GM12878 (cell line): ENCODE measurements at regions of chr1 and their contacts with region 1.

Region 1: GRCh38 chr1:199243423-199244061 is 604.7 kb downstream of the PTPRC start:
- DNase-seq: peak; percentile 67
- ATAC-seq: peak; percentile 100
- H3K4me3 ChIP-seq: no peak overlapping the region
- H3K27ac ChIP-seq: no peak overlapping the region
- H3K4me1 ChIP-seq: peaks cover 11% of the 10 kb centered on the region
- H3K27me3 ChIP-seq: no peaks in the 10 kb centered on the region
- CTCF ChIP-seq: peak; percentile 91 to 94 (median 93)
- EP300 ChIP-seq: no peak
- POLR2A ChIP-seq: no peak
- RAD21 ChIP-seq: peak; percentile 96

Region 2: GRCh38 chr1:198575798-198576641 is 667.5 kb before region 1 on chr1:
- CTCF ChIA-PET with region 1: no interaction called
- POLR2A ChIA-PET with region 1: no interaction called
- RAD21 ChIA-PET with region 1: no interaction called
- SMC1A ChIA-PET with region 1: no interaction called
- in situ Hi-C with region 1: no loop called
- intact Hi-C with region 1: no loop called
- DNase-seq: no peak
- ATAC-seq: peak; percentile 65
- H3K4me3 ChIP-seq: no peak overlapping the region
- H3K27ac ChIP-seq: no peak overlapping the region
- H3K4me1 ChIP-seq: peaks cover 12% of the 10 kb centered on the region
- H3K27me3 ChIP-seq: no peaks in the 10 kb centered on the region
- CTCF ChIP-seq: no peak
- EP300 ChIP-seq: 0 out of 4 replicates have a peak, but pooled peaks of 1 of the 2 experiments have one; percentile 14
- POLR2A ChIP-seq: no peak
- RAD21 ChIP-seq: no peak

Region 3: DNA sequence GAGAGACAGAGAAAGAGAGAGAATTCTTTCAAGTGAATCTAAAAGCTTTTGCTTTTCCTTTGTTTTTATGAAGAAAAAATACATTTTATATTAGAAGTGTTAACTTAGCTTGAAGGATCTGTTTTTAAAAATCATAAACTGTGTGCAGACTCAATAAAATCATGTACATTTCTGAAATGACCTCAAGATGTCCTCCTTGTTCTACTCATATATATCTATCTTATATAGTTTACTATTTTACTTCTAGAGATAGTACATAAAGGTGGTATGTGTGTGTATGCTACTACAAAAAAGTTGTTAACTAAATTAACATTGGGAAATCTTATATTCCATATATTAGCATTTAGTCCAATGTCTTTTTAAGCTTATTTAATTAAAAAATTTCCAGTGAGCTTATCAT is 487.1 kb before region 1 on chr1:
- CTCF ChIA-PET with region 1: interaction called, 5 read pairs
- POLR2A ChIA-PET with region 1: no interaction called
- RAD21 ChIA-PET with region 1: interaction called, 4 read pairs
- SMC1A ChIA-PET with region 1: interaction called, 22 read pairs
- in situ Hi-C with region 1: no loop called
- intact Hi-C with region 1: no loop called
- DNase-seq: no peak
- ATAC-seq: peak; percentile 58; the same call in 2 of the 3 replicates
- H3K4me3 ChIP-seq: no peak overlapping the region
- H3K27ac ChIP-seq: no peak overlapping the region
- H3K4me1 ChIP-seq: no peaks in the 10 kb centered on the region
- H3K27me3 ChIP-seq: no peaks in the 10 kb centered on the region
- CTCF ChIP-seq: peak in 1 of 3 experiments; percentile 5; a peak in 1 of 6 replicates
- EP300 ChIP-seq: no peak
- POLR2A ChIP-seq: no peak
- RAD21 ChIP-seq: no peak

Region 4: DNA sequence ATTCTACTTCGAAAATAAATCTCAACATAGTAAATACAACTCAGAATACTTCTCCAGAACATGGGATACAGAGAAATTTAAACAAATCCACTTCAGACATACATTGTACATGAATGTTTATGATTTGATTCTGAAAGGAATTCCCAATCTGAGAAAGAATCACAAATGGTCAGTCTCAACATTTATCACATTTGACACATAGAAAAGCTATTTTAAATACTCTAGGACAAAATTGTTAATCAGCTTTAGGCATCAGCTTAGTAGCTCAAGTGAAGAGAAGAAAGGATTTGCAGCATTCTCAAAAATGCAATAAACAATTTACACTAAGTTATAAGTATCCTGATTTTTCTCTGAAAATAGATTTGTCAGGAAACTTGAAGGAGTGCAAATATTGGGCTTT is 419.9 kb before region 1 on chr1:
- CTCF ChIA-PET with region 1: interaction called, 13 read pairs
- POLR2A ChIA-PET with region 1: no interaction called
- RAD21 ChIA-PET with region 1: no interaction called
- SMC1A ChIA-PET with region 1: interaction called, 9 read pairs
- in situ Hi-C with region 1: no loop called
- intact Hi-C with region 1: no loop called
- DNase-seq: no peak
- ATAC-seq: no peak
- H3K4me3 ChIP-seq: no peak overlapping the region
- H3K27ac ChIP-seq: no peak overlapping the region
- H3K4me1 ChIP-seq: no peaks in the 10 kb centered on the region
- H3K27me3 ChIP-seq: no peaks in the 10 kb centered on the region
- CTCF ChIP-seq: no peak
- EP300 ChIP-seq: no peak
- POLR2A ChIP-seq: no peak
- RAD21 ChIP-seq: no peak

Region 5: DNA sequence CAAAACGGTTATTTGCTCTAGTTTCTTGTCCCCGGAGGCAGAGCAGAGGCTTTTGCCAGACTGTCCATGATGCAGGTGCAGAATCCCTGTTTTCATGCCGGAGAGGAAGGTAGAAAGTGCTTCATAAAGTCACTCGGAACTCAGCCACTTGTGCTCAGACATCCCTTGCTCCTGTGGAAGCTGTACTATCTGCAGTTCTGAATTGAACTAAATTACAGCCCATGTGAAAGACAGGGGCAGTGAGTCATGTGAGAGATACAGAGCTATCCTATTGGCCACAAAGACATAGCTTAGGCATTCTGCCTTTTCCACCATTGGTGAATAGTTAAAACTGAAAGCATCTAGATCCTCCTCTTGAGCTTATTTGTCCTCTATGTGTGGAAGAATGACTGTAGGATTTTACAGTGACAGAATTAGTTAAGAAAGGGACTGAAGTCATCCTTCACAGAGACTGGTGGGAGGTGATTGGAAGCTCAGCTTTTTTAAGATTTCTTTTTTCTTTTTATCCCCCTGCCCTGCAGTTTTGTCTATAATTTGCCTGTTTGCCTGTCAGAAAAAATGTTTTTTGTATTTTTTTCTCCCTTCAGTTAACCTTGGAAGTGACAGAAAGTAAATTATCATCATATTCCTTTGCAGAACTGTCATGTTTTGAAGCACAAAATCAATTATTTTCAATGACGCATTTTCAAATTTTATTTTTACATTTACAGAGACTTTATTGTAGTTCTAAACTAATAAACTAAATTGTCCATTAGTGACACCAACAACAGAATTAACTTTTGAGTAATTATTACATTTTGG is 306.1 kb before region 1 on chr1:
- CTCF ChIA-PET with region 1: interaction called, 41 read pairs
- POLR2A ChIA-PET with region 1: interaction called, 6 read pairs
- RAD21 ChIA-PET with region 1: interaction called, 52 read pairs
- SMC1A ChIA-PET with region 1: interaction called, 26 read pairs
- in situ Hi-C with region 1: no loop called
- intact Hi-C with region 1: loop called (anchors 2 kb)
- DNase-seq: peak; percentile 91
- ATAC-seq: peak; percentile 85
- H3K4me3 ChIP-seq: peak overlapping the region; percentile 62
- H3K27ac ChIP-seq: peak overlapping the region; percentile 29
- H3K4me1 ChIP-seq: no peaks in the 10 kb centered on the region; the same call in 1 of the 2 replicates
- H3K27me3 ChIP-seq: no peaks in the 10 kb centered on the region
- CTCF ChIP-seq: no peak
- EP300 ChIP-seq: no peak
- POLR2A ChIP-seq: peak; percentile 87
- RAD21 ChIP-seq: no peak

Region 6: DNA sequence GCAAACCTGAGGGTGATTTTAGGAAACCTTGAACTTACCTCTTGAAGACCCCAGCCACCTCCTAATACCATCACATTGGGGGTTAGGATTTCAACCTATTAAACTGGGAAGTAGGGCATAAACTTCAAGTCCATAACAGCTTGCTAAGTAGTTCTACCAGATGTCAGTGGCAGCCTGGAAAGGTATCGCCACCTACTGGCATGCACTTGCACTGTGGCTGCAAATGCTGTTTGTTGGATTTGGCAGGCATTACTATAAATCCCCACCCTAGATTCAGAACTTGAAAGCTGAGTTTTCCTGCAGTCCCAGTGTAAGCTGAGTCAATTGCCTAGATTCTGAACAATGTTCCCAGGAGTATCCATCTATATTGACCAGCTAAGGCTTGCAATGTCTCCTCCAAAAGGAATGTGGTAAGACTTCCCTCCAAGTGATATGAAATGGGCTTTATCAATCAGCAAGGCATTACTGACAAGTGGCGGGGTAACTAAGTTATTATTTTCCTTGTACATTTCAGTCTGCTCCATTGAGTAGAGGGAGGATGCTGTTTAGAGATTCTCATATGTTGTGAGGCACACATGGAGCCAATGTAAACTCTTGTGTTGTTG is 130.2 kb before region 1 on chr1:
- CTCF ChIA-PET with region 1: interaction called, 46 read pairs
- POLR2A ChIA-PET with region 1: no interaction called
- RAD21 ChIA-PET with region 1: interaction called, 36 read pairs
- SMC1A ChIA-PET with region 1: interaction called, 14 read pairs
- in situ Hi-C with region 1: no loop called
- intact Hi-C with region 1: loop called (anchors 1 kb)
- DNase-seq: peak; percentile 43
- ATAC-seq: peak; percentile 92
- H3K4me3 ChIP-seq: no peak overlapping the region
- H3K27ac ChIP-seq: no peak overlapping the region
- H3K4me1 ChIP-seq: no peaks in the 10 kb centered on the region
- H3K27me3 ChIP-seq: no peaks in the 10 kb centered on the region
- CTCF ChIP-seq: peak; percentile 58 to 87 (median 77)
- EP300 ChIP-seq: no peak
- POLR2A ChIP-seq: no peak
- RAD21 ChIP-seq: peak; percentile 91

Region 7: DNA sequence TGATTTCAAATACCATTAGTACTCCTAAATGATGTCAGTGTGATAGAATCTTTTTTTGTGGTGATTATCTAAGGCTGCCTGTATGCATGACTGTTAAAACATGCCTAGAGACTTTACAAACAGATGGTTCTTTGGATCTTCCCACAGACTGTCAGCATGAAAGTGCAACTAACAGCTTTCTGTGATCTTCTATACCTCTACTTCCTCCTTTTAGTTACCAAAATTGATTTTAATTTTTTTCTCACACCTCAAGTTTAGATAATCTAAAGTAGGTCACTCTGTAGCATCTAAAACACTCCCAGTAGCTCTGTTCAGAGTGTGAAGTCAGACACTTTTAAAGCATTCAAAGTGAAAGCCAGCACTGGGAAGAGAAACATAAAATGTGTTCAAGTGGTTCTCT is 70.2 kb before region 1 on chr1:
- CTCF ChIA-PET with region 1: interaction called, 14 read pairs
- POLR2A ChIA-PET with region 1: interaction called, 3 read pairs
- RAD21 ChIA-PET with region 1: interaction called, 11 read pairs
- SMC1A ChIA-PET with region 1: interaction called, 35 read pairs
- in situ Hi-C with region 1: no loop called
- intact Hi-C with region 1: loop called (anchors 1 kb)
- DNase-seq: peak; percentile 92
- ATAC-seq: peak; percentile 89
- H3K4me3 ChIP-seq: no peak overlapping the region
- H3K27ac ChIP-seq: peak overlapping the region; percentile 85
- H3K4me1 ChIP-seq: peaks cover 27% of the 10 kb centered on the region
- H3K27me3 ChIP-seq: no peaks in the 10 kb centered on the region
- CTCF ChIP-seq: no peak
- EP300 ChIP-seq: peak; percentile 94 to 95
- POLR2A ChIP-seq: no peak
- RAD21 ChIP-seq: peak; percentile 20; the same call in 1 of the 2 replicates

Region 8: DNA sequence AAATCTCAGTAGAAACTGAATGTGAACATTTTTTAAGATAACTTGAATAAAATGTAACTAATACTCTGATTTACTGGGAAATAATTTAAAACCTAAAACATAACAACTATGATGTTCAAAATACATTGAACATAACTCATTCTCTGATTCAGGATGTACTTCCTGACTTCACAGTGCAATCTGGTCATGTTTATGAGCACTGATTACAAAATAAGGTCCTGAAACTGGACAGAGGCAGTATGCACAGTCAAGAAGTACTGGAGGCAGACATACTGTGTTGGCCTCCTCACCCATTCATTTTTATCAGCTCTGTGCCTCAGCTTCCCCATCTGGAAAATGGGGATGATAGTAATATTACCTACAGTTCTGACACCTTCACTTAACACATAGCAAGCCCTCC is 46.6 kb after region 1 on chr1:
- CTCF ChIA-PET with region 1: no interaction called
- POLR2A ChIA-PET with region 1: no interaction called
- RAD21 ChIA-PET with region 1: no interaction called
- SMC1A ChIA-PET with region 1: no interaction called
- in situ Hi-C with region 1: no loop called
- intact Hi-C with region 1: no loop called
- DNase-seq: no peak
- ATAC-seq: no peak
- H3K4me3 ChIP-seq: no peak overlapping the region
- H3K27ac ChIP-seq: no peak overlapping the region
- H3K4me1 ChIP-seq: no peaks in the 10 kb centered on the region
- H3K27me3 ChIP-seq: no peaks in the 10 kb centered on the region
- CTCF ChIP-seq: no peak
- EP300 ChIP-seq: no peak
- POLR2A ChIP-seq: no peak
- RAD21 ChIP-seq: no peak

Region 9: GRCh38 chr1:199508653-199509052 is 265.1 kb after region 1 on chr1:
- CTCF ChIA-PET with region 1: no interaction called
- POLR2A ChIA-PET with region 1: no interaction called
- RAD21 ChIA-PET with region 1: no interaction called
- SMC1A ChIA-PET with region 1: no interaction called
- in situ Hi-C with region 1: no loop called
- intact Hi-C with region 1: no loop called
- DNase-seq: no peak
- ATAC-seq: no peak
- H3K4me3 ChIP-seq: no peak overlapping the region
- H3K27ac ChIP-seq: no peak overlapping the region
- H3K4me1 ChIP-seq: no peaks in the 10 kb centered on the region
- H3K27me3 ChIP-seq: no peaks in the 10 kb centered on the region
- CTCF ChIP-seq: no peak
- EP300 ChIP-seq: no peak
- POLR2A ChIP-seq: no peak
- RAD21 ChIP-seq: no peak

Region 10: GRCh38 chr1:199551967-199552565 is 308.5 kb after region 1 on chr1:
- CTCF ChIA-PET with region 1: interaction called, 4 read pairs
- POLR2A ChIA-PET with region 1: no interaction called
- RAD21 ChIA-PET with region 1: interaction called, 3 read pairs
- SMC1A ChIA-PET with region 1: interaction called, 5 read pairs
- in situ Hi-C with region 1: no loop called
- intact Hi-C with region 1: loop called (anchors 2 kb)
- DNase-seq: no peak
- ATAC-seq: peak; percentile 63
- H3K4me3 ChIP-seq: no peak overlapping the region
- H3K27ac ChIP-seq: no peak overlapping the region
- H3K4me1 ChIP-seq: no peaks in the 10 kb centered on the region
- H3K27me3 ChIP-seq: no peaks in the 10 kb centered on the region
- CTCF ChIP-seq: peak; percentile 64 to 68 (median 67)
- EP300 ChIP-seq: no peak
- POLR2A ChIP-seq: no peak
- RAD21 ChIP-seq: peak; percentile 94

Region 11: GRCh38 chr1:200027264-200027823 is 783.8 kb after region 1 on chr1 and contains the start of gene NR5A2:
- CTCF ChIA-PET with region 1: no interaction called
- POLR2A ChIA-PET with region 1: no interaction called
- RAD21 ChIA-PET with region 1: no interaction called
- SMC1A ChIA-PET with region 1: no interaction called
- in situ Hi-C with region 1: no loop called
- intact Hi-C with region 1: no loop called
- DNase-seq: no peak
- ATAC-seq: no peak
- H3K4me3 ChIP-seq: no peak within 1 kb of the TSS
- H3K27ac ChIP-seq: no peak within 1 kb of the TSS
- H3K4me1 ChIP-seq: no peaks in the 10 kb centered on the region
- H3K27me3 ChIP-seq: peaks cover 3 to 17% of the 10 kb centered on the region in 2 experiments; a peak in 3 of 4 replicates
- CTCF ChIP-seq: no peak
- EP300 ChIP-seq: no peak
- POLR2A ChIP-seq: no peak
- RAD21 ChIP-seq: no peak
- polyA plus RNA-seq, gene NR5A2: 0.02 to 0.11 TPM